ENCODE measurements at regions of chr20 and their contacts with region 1.

Region 1: DNA sequence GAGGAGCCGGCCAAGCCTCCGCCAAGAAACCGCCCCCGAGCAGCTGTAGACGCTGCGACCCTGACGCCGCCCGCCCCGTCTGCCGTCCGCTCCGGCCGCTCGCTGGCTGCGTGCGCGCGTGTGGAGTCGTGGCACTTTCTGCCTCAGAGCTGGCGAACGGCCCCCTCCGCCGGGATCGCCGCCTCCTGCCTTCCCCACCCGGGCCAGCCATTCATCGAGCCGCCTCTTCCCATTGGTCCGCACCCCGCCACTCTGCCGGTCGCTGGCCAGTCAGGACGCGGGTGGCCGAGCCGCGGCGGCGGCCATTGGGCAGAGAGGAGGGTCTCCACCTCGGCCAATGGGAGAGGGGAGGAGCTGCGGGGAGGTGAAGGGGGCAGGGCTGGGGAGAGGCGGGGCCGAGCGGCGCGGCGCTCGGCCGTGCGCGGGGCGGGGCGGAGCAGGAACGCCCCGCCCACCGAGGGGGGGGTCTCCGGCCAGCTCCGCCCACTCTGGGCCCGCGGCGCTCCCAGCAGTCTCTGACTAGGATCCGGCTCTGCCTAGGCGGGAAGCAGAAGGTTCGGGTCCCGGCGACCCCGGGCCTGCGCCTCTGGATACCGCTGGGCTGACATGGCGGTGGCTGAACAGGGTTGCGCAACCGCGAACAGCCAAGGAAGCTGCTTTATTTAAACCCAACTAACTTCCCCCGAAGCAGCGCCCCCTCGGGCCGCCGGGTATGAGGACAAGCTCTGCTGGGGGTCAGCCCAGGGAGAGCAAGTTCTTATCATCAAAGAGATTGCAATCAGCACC is at the start of gene RRBP1:
- DNase-seq: peak; percentile 89 to 97 (median 97)
- ATAC-seq: peak; percentile 94
- H3K4me3 ChIP-seq: peak within 1 kb of the TSS; percentile 80
- H3K4me3 Mint-ChIP-seq: peak within 1 kb of the TSS; percentile 86 to 93 (median 90)
- H3K27ac ChIP-seq: peak within 1 kb of the TSS; percentile 74
- H3K27ac Mint-ChIP-seq: peak within 1 kb of the TSS; percentile 71 to 92 (median 86)
- H3K4me1 ChIP-seq: peaks cover 0 to 18% of the 10 kb centered on the region in 2 donors
- H3K4me1 Mint-ChIP-seq: peaks cover 20 to 26% (median 24%) of the 10 kb centered on the region in 7 donors
- H3K27me3 ChIP-seq: peaks cover 0 to 4% of the 10 kb centered on the region in 2 donors
- H3K27me3 Mint-ChIP-seq: peaks cover 22 to 42% (median 33%) of the 10 kb centered on the region in 5 donors
- total RNA-seq, gene RRBP1: 27.8 to 73.9 (median 29.1) TPM

Region 2: GRCh38 chr20:17169585-17170136 is 512.6 kb before region 1 on chr20:
- CTCF ChIA-PET with region 1: no interaction called
- POLR2A ChIA-PET with region 1: no interaction called
- intact Hi-C with region 1: no loop called
- DNase-seq: no peak
- ATAC-seq: no peak
- H3K4me3 ChIP-seq: no peak overlapping the region
- H3K4me3 Mint-ChIP-seq: no peak overlapping the region
- H3K27ac ChIP-seq: no peak overlapping the region
- H3K27ac Mint-ChIP-seq: no peak overlapping the region
- H3K4me1 ChIP-seq: no peaks in the 10 kb centered on the region
- H3K4me1 Mint-ChIP-seq: no peaks in the 10 kb centered on the region
- H3K27me3 ChIP-seq: no peaks in the 10 kb centered on the region
- H3K27me3 Mint-ChIP-seq: peaks cover 0 to 5% (median 3%) of the 10 kb centered on the region in 5 donors

Region 3: DNA sequence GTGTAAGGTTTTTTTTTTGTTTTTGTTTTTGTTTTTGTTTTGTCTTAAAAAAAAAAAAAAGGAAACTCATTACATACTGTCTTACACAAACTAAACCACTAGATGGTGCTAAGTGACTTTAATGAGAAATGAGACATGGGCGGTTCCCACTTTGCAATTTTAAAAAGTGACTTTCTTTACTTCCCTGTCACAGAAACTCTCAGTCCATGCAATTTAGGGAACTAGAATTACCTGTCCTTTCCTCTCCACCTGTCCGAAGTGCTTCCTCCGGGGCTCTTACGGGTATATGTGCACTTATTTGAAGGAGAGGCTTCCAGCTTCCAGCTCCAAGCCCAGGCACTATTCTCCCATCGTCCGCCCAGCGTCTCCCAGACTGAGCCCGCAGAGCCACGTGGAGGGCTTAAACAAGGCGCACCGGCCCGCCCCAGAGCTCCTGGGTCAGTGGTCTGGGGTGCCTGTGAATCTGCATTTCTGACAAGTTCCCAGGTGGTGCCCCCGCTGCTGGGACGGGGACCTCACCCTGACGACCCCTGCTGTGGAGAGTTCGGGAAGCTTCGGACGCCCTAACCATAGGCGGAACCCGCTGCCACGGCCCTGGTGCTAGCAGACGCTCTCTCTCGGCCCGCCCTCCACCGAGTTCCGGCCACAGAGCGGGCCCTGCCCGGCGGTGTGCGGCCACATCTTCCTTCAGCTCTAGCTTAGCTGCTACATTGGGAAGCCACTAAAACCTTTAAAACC is 177.2 kb before region 1 on chr20:
- CTCF ChIA-PET with region 1: no interaction called
- POLR2A ChIA-PET with region 1: no interaction called
- intact Hi-C with region 1: loop called (anchors 1 kb)
- DNase-seq: peak; percentile 13 to 70 (median 62)
- ATAC-seq: peak; percentile 85
- H3K4me3 ChIP-seq: peak overlapping the region; percentile 65
- H3K4me3 Mint-ChIP-seq: peak overlapping the region; percentile 82 to 95 (median 91)
- H3K27ac ChIP-seq: no peak overlapping the region
- H3K27ac Mint-ChIP-seq: peak overlapping the region in 8 of 9 donors; percentile 15 to 92 (median 82)
- H3K4me1 ChIP-seq: peaks cover 6 to 27% of the 10 kb centered on the region in 2 donors
- H3K4me1 Mint-ChIP-seq: peaks cover 10 to 57% (median 36%) of the 10 kb centered on the region in 7 donors
- H3K27me3 ChIP-seq: no peaks in the 10 kb centered on the region
- H3K27me3 Mint-ChIP-seq: peaks cover 0 to 19% (median 0%) of the 10 kb centered on the region in 5 donors

Region 4: DNA sequence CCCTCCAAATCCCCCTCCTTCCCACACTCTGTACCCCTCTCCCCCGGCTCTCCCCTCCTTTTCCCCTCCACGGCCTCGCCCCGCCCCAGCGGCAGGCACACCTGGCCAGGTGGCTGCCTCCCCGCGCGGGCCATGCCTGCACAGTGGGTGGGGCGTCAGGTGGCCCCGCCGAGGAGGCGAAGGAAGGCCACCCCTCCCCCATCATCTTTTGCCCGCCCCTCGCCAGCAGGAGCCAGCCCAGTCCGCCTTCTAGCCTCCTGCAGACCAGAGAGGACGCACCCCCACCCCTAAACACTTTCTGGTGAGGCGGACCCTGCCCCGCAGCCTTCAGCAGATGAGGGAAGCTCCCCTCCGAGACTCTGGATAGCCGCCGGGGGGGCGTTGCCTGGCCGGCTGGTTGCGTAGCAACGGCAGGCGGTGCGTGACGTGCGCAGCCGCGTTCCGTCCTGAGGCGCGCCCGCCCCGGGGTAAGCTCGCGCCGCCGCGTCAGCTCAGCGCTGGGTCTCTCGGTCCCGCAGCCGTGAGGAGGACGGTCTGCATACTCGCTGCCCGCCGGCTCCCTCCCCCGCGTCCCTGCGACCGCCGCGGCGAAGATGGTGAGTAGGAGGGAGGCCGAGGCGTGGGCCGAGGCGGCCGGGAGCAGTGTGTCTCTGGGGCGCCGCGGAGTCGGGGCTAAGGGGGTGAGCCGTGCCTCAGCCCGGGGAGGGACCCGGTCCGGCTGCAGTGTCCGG is 112.5 kb before region 1 on chr20 and contains the start of gene DSTN:
- CTCF ChIA-PET with region 1: interaction called, 11 read pairs
- POLR2A ChIA-PET with region 1: interaction called, 7 read pairs
- intact Hi-C with region 1: loop called (anchors 1 kb)
- DNase-seq: peak; percentile 83 to 91 (median 89)
- ATAC-seq: peak; percentile 95
- H3K4me3 ChIP-seq: peak within 1 kb of the TSS; percentile 94
- H3K4me3 Mint-ChIP-seq: peak within 1 kb of the TSS; percentile 82 to 97 (median 95)
- H3K27ac ChIP-seq: peak within 1 kb of the TSS; percentile 85
- H3K27ac Mint-ChIP-seq: peak within 1 kb of the TSS; percentile 80 to 96 (median 91)
- H3K4me1 ChIP-seq: peaks cover 5 to 11% of the 10 kb centered on the region in 2 donors
- H3K4me1 Mint-ChIP-seq: peaks cover 17 to 44% (median 31%) of the 10 kb centered on the region in 7 donors
- H3K27me3 ChIP-seq: no peaks in the 10 kb centered on the region
- H3K27me3 Mint-ChIP-seq: peaks cover 0 to 14% (median 0%) of the 10 kb centered on the region in 5 donors
- total RNA-seq, gene DSTN: 28.7 to 63.6 (median 33.9) TPM

Region 5: DNA sequence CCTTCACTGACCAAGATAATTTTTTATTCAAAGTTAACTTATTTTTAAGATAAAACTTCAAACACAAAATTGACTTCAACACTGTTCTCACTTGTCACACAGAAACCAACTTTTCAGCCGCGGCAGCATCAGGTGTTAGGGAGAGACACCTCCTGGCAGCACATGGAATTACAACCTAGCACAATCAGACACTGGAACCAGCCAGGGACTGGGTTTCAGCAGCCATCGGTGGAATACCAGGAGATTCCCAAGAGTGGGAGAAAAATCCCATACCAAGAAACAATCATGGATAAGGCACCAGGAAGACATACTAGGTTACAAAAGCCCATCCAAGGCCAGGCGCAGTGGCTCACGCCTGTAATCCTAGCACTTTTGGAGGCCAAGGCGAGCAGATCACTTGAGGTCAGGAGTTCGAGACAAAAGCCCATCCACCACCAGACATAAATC is 216.3 kb after region 1 on chr20:
- CTCF ChIA-PET with region 1: interaction called, 5 read pairs
- POLR2A ChIA-PET with region 1: no interaction called
- intact Hi-C with region 1: loop called (anchors 1 kb)
- DNase-seq: peak; percentile 23 to 64 (median 54)
- ATAC-seq: peak; percentile 81
- H3K4me3 ChIP-seq: no peak overlapping the region
- H3K4me3 Mint-ChIP-seq: no peak overlapping the region
- H3K27ac ChIP-seq: no peak overlapping the region
- H3K27ac Mint-ChIP-seq: no peak overlapping the region
- H3K4me1 ChIP-seq: no peaks in the 10 kb centered on the region
- H3K4me1 Mint-ChIP-seq: peaks cover 0 to 21% (median 11%) of the 10 kb centered on the region in 7 donors
- H3K27me3 ChIP-seq: no peaks in the 10 kb centered on the region
- H3K27me3 Mint-ChIP-seq: peaks cover 22 to 41% (median 34%) of the 10 kb centered on the region in 5 donors

Region 6: DNA sequence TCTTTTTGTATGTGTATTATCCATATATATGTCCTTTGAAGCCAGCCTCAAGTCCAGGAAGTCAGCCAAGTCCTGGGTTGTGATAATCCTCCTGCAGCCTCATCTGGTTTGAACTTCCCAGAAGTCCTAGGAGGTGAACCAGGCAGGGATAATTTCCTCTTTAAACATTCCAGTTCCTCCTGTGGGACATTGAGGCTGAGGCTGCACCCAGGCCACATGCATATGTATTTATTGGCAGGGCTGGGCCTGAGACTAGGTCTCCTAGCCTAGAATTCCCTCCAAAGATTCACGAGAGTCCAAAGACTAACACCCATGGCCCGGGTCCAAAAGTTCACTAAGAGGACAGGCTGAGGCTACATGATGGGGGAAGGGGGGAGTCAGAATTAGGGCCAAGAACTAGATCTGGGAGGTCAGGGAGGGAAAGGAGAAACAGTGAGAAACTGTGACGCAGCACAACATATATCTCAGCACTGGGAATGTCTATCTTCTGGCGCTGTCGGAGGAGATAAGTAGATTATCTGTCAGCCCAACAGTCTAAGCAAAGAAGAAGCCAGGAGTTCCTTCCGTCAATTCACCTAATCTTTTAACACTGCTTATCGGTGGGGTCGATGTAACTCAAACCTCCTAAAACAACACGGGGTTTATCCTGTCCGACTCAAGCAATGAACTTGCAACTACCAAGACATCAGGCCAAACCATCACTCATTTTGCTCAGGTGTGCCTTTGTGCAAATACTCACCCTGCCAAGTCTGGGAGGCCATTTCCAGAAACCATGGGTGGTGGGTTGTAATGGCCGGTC is 243.0 kb after region 1 on chr20:
- CTCF ChIA-PET with region 1: no interaction called
- POLR2A ChIA-PET with region 1: no interaction called
- intact Hi-C with region 1: no loop called
- DNase-seq: no peak
- ATAC-seq: no peak
- H3K4me3 ChIP-seq: no peak overlapping the region
- H3K4me3 Mint-ChIP-seq: no peak overlapping the region
- H3K27ac ChIP-seq: no peak overlapping the region
- H3K27ac Mint-ChIP-seq: no peak overlapping the region
- H3K4me1 ChIP-seq: no peaks in the 10 kb centered on the region
- H3K4me1 Mint-ChIP-seq: no peaks in the 10 kb centered on the region
- H3K27me3 ChIP-seq: no peaks in the 10 kb centered on the region
- H3K27me3 Mint-ChIP-seq: peaks cover 0 to 13% (median 0%) of the 10 kb centered on the region in 5 donors

Region 7: GRCh38 chr20:17995967-17996819 is 313.9 kb after region 1 on chr20:
- CTCF ChIA-PET with region 1: interaction called, 3 read pairs
- POLR2A ChIA-PET with region 1: no interaction called
- intact Hi-C with region 1: loop called (anchors 1 kb)
- DNase-seq: peak in 7 of 9 donors; percentile 35 to 68 (median 59)
- ATAC-seq: peak; percentile 94
- H3K4me3 ChIP-seq: no peak overlapping the region
- H3K4me3 Mint-ChIP-seq: no peak overlapping the region
- H3K27ac ChIP-seq: no peak overlapping the region
- H3K27ac Mint-ChIP-seq: peak overlapping the region in 1 of 9 donors; percentile 48
- H3K4me1 ChIP-seq: peaks cover 0 to 8% of the 10 kb centered on the region in 2 donors
- H3K4me1 Mint-ChIP-seq: peaks cover 4 to 45% (median 6%) of the 10 kb centered on the region in 7 donors
- H3K27me3 ChIP-seq: no peaks in the 10 kb centered on the region
- H3K27me3 Mint-ChIP-seq: peaks cover 3 to 13% (median 8%) of the 10 kb centered on the region in 5 donors

Region 8: DNA sequence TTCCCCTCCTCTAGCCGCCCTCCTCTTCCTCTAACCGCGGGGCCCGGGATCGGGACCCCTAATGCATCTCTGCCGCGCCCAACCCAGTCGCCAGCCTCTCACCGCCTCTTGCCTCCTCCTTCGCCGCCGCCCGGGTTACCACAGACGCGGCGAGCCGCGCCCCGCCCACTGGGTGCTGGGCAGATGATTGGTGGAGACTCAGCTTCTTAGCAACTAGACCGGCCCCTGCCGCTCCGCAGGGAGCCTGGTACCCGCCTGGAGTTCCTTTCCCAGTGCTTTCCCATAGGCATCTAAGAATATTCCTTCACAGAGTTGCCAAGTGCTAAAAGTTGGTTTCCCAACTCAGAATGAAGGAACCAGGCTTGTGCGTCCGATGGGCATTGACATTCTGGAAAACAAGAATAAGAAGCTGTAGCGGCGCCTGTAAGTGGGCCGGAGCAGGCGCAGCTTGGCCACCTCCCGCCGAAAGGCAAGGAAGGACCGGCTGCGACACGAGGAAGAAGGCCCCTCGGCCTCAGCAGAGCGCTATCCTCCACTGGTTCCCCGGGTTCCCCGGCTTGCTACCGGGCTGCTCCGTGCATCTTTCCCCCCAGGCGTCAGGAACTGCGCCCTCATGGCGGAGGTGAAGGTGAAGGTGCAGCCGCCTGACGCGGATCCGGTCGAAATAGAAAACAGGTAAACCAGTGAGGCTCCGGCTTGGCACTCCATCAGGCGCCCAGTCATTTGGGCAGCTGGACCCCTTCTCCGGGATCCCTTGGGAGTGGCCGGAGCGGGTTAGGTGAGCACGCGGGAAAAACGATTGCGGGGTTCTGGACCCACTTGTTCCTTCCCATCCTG is 784.8 kb after region 1 on chr20 and contains the starts of genes DZANK1 and POLR3F:
- CTCF ChIA-PET with region 1: no interaction called
- POLR2A ChIA-PET with region 1: no interaction called
- intact Hi-C with region 1: loop called in 1 of 2 experiments (anchors 1 kb)
- DNase-seq: peak; percentile 85 to 93 (median 92)
- ATAC-seq: peak; percentile 97
- H3K4me3 ChIP-seq: peak within 1 kb of the TSS; percentile 93
- H3K4me3 Mint-ChIP-seq: peak within 1 kb of the TSS; percentile 89 to 99 (median 97)
- H3K27ac ChIP-seq: peak within 1 kb of the TSS; percentile 77
- H3K27ac Mint-ChIP-seq: peak within 1 kb of the TSS; percentile 93 to 99 (median 98)
- H3K4me1 ChIP-seq: peaks cover 7 to 14% of the 10 kb centered on the region in 2 donors
- H3K4me1 Mint-ChIP-seq: peaks cover 25 to 44% (median 37%) of the 10 kb centered on the region in 7 donors
- H3K27me3 ChIP-seq: no peaks in the 10 kb centered on the region
- H3K27me3 Mint-ChIP-seq: no peaks in the 10 kb centered on the region
- total RNA-seq, gene DZANK1: 1.2 to 3.5 (median 2.9) TPM
- total RNA-seq, gene POLR3F: 5.0 to 13.5 (median 11.5) TPM

Region 9: DNA sequence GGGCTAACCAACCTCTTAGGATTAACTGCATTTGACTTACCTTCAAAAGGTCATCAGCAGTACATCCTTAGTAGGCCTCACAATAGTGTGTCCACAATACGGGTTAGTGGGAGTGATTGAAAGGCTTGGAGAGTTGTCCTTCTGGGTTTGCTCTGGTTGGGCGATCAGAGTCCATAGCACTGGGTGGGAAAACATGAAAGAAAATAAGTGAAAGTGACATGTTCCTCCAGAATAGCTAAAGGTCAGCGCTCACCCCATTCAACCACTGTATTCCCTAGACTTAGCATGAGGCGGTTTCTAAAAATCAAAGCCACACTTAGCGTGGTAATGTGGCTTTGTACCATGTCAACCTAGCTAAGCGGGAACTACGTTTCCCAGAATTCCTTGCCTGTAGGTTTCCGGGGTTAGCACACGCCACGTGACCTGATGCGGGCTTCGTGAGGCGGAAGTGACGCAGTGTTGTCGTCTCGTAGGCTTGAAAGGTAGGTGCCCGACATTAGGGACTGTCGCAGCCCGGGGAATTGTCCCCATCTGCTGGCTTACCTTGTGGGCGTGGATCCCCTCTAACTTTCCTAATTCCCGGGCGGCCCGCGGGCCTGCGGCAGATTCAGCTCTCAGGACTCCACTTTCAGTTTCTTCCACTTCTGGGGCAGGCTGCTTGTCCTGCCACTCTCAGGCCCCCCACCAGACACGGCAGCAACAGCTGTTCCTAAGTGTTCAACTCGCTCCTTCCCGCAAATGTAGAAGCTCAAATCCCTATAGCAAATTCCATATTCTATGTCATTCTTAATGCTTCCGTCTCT is 1111.5 kb after region 1 on chr20:
- CTCF ChIA-PET with region 1: no interaction called
- POLR2A ChIA-PET with region 1: no interaction called
- intact Hi-C with region 1: loop called in 1 of 2 experiments (anchors 2 kb)
- DNase-seq: peak; percentile 62 to 94 (median 87)
- ATAC-seq: peak; percentile 99
- H3K4me3 ChIP-seq: peak overlapping the region; percentile 87
- H3K4me3 Mint-ChIP-seq: peak overlapping the region; percentile 85 to 99 (median 96)
- H3K27ac ChIP-seq: peak overlapping the region; percentile 92
- H3K27ac Mint-ChIP-seq: peak overlapping the region; percentile 97 to 100 (median 99)
- H3K4me1 ChIP-seq: peaks cover 8% of the 10 kb centered on the region in 2 donors
- H3K4me1 Mint-ChIP-seq: peaks cover 0 to 24% (median 18%) of the 10 kb centered on the region in 7 donors
- H3K27me3 ChIP-seq: no peaks in the 10 kb centered on the region
- H3K27me3 Mint-ChIP-seq: peaks cover 11 to 26% (median 21%) of the 10 kb centered on the region in 5 donors